ENCODE measurements at regions of chr1 and their contacts with region 1.

Region 1: DNA sequence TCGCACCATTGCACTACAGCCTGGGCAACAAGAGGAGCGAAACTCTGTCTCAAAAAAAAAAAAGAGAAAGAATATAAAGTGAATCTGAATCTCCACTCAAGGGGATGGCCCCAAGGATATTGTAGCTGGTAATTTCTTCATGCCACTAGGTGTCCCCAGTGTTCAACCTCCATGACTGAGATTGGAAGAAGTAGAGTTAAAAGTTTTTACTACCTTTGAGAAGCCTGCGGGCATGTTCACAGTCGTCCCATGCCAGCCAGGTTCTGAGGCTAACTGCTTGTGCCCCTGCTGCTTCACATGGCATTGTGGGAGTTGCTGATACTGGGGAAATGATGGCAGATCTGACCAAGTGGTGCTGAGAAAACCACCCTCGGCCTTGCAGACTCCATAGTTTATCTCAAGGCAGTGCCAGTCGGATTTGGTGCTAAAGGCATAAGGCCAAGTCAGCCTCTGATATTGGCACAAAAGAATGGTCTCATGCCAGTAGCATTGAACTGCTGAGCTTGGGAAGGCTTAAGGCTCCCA is 10.8 kb upstream of the SHISA4 start:
- DNase-seq: peak in 2 of 9 donors; percentile 22 to 23
- ATAC-seq: peak; percentile 55
- H3K4me3 ChIP-seq: no peak overlapping the region
- H3K4me3 Mint-ChIP-seq: no peak overlapping the region
- H3K27ac ChIP-seq: no peak overlapping the region
- H3K27ac Mint-ChIP-seq: peak overlapping the region in 4 of 9 donors; percentile 40 to 60 (median 46)
- H3K4me1 ChIP-seq: no peaks in the 10 kb centered on the region
- H3K4me1 Mint-ChIP-seq: peaks cover 0 to 3% (median 0%) of the 10 kb centered on the region in 7 donors
- H3K27me3 ChIP-seq: no peaks in the 10 kb centered on the region
- H3K27me3 Mint-ChIP-seq: no peaks in the 10 kb centered on the region

Region 2: GRCh38 chr1:201970334-201971159 is 92.6 kb after region 1 on chr1:
- CTCF ChIA-PET with region 1: interaction called, 4 read pairs
- POLR2A ChIA-PET with region 1: no interaction called
- intact Hi-C with region 1: loop called (anchors 1 to 5 kb)
- DNase-seq: no peak
- ATAC-seq: no peak
- H3K4me3 ChIP-seq: no peak overlapping the region
- H3K4me3 Mint-ChIP-seq: no peak overlapping the region
- H3K27ac ChIP-seq: no peak overlapping the region
- H3K27ac Mint-ChIP-seq: no peak overlapping the region
- H3K4me1 ChIP-seq: no peaks in the 10 kb centered on the region
- H3K4me1 Mint-ChIP-seq: peaks cover 0 to 2% (median 0%) of the 10 kb centered on the region in 7 donors
- H3K27me3 ChIP-seq: no peaks in the 10 kb centered on the region
- H3K27me3 Mint-ChIP-seq: peaks cover 0 to 15% (median 0%) of the 10 kb centered on the region in 5 donors

Region 3: DNA sequence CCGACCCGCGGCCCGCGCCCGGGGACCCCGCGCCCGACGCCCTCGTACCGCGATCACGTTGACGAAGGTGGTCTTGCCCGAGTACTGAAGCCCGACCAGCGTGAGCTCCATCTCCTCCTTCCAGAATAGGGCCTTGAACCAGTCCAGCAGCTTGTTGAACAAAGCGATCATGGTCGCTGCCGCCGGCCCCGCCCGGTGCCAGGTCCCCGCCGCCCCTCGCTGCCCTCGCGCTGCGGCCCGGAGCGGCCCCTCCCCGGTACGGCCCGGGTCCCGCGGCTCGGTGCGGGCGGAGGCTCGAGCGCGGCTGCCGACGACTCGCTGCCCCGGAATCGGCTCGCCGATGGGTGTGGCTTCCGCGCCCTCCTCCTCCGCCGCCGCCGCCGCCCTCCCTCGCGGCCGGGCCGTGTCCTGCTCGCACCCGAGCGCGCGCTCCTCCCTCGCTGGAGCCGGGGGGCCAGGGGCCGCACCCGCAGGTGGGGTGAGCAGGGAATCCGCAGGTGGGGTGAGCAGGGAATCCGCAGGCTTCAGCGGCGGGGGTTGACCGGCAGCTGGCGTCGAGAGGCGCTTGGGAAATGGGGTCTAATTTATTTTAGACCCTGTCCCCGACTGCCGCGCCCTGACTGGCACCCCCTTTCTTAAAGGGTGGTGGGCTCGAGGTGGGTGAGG is 266.6 kb after region 1 on chr1 and contains the start of gene ARL8A:
- CTCF ChIA-PET with region 1: no interaction called
- POLR2A ChIA-PET with region 1: no interaction called
- intact Hi-C with region 1: loop called in 1 of 2 experiments (anchors 5 kb)
- DNase-seq: peak; percentile 47 to 81 (median 62)
- ATAC-seq: peak; percentile 81
- H3K4me3 ChIP-seq: peak within 1 kb of the TSS; percentile 83
- H3K4me3 Mint-ChIP-seq: peak within 1 kb of the TSS; percentile 90 to 98 (median 93)
- H3K27ac ChIP-seq: peak within 1 kb of the TSS; percentile 83
- H3K27ac Mint-ChIP-seq: peak within 1 kb of the TSS; percentile 85 to 98 (median 92)
- H3K4me1 ChIP-seq: peaks cover 14 to 21% of the 10 kb centered on the region in 2 donors
- H3K4me1 Mint-ChIP-seq: peaks cover 16 to 44% (median 38%) of the 10 kb centered on the region in 7 donors
- H3K27me3 ChIP-seq: no peaks in the 10 kb centered on the region
- H3K27me3 Mint-ChIP-seq: no peaks in the 10 kb centered on the region
- total RNA-seq, gene ARL8A: 38.2 to 99.4 (median 54.3) TPM

Region 4: GRCh38 chr1:202304375-202304774 is 426.4 kb after region 1 on chr1:
- CTCF ChIA-PET with region 1: no interaction called
- POLR2A ChIA-PET with region 1: no interaction called
- intact Hi-C with region 1: no loop called
- DNase-seq: no peak
- ATAC-seq: no peak
- H3K4me3 ChIP-seq: no peak overlapping the region
- H3K4me3 Mint-ChIP-seq: no peak overlapping the region
- H3K27ac ChIP-seq: no peak overlapping the region
- H3K27ac Mint-ChIP-seq: no peak overlapping the region
- H3K4me1 ChIP-seq: no peaks in the 10 kb centered on the region
- H3K4me1 Mint-ChIP-seq: peaks cover 0 to 1% (median 0%) of the 10 kb centered on the region in 7 donors
- H3K27me3 ChIP-seq: no peaks in the 10 kb centered on the region
- H3K27me3 Mint-ChIP-seq: peaks cover 0 to 2% (median 0%) of the 10 kb centered on the region in 5 donors

Measured in naive thymus-derived CD4-positive, alpha-beta T cell (primary cell).